Endothelial cell of umbilical vein (primary cell): ENCODE measurements at regions of chr9 and their contacts with region 1.

Region 1: GRCh38 chr9:104895572-104895971 is 32.4 kb downstream of the ABCA1 start:
- DNase-seq: no peak
- H3K4me3 ChIP-seq: no peak overlapping the region
- H3K27ac ChIP-seq: no peak overlapping the region
- H3K4me1 ChIP-seq: no peaks in the 10 kb centered on the region
- H3K27me3 ChIP-seq: no peaks in the 10 kb centered on the region
- CTCF ChIP-seq: no peak
- POLR2A ChIP-seq: no peak

Region 2: DNA sequence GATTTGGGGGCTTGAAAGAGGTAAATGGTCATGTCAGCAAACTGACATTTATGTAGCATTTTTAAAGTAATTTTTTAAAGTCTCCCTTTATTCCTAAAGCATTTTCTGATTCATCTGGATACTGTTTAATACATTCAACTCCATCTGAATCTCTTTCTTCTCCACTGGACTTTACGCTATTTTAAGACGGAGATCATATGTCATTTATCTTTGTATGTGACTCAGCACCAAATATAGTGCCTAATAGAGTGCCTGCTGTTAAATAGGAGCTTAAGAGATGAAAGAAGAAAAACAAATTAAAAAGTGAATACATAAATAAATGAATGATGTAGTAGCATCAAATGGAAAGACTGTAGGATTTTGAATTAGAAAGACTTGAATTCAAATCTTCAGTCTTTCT is 1350.3 kb before region 1 on chr9:
- CTCF ChIA-PET with region 1: no interaction called
- POLR2A ChIA-PET with region 1: no interaction called
- dilution Hi-C with region 1: no loop called
- intact Hi-C with region 1: no loop called
- DNase-seq: no peak
- H3K4me3 ChIP-seq: no peak overlapping the region
- H3K27ac ChIP-seq: no peak overlapping the region
- H3K4me1 ChIP-seq: no peaks in the 10 kb centered on the region
- H3K27me3 ChIP-seq: no peaks in the 10 kb centered on the region
- CTCF ChIP-seq: no peak
- POLR2A ChIP-seq: no peak

Region 3: DNA sequence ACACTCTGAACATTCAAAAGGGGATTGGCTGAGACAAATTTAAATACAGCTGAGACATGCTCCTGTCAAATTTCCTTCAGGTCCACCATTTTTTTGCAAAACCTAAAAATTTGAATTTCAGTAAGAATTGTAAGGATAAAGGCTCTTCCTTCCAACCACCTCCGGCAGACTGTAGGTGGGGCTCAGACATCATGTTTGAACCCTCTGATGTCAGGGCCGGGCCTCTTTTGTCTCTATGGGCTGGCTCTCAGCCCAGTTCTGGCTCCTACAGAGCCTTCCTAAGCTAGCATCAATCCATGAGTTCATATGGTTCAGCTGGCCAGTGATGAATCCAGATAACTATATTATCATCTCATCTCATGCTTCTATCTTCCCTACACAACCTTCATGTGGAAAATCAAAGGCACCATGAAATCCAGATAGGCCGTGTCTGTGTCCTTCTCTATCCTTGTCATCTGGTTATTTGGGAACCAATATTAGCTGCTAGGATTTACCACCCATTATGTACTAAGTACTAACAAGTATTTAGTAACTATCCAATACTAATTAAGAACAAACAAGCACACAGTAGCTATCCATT is 87.4 kb before region 1 on chr9:
- CTCF ChIA-PET with region 1: no interaction called
- POLR2A ChIA-PET with region 1: no interaction called
- dilution Hi-C with region 1: no loop called
- intact Hi-C with region 1: no loop called
- DNase-seq: peak; percentile 46
- H3K4me3 ChIP-seq: no peak overlapping the region
- H3K27ac ChIP-seq: no peak overlapping the region
- H3K4me1 ChIP-seq: no peaks in the 10 kb centered on the region
- H3K27me3 ChIP-seq: no peaks in the 10 kb centered on the region
- CTCF ChIP-seq: peak; percentile 24 to 48
- POLR2A ChIP-seq: no peak

Region 4: GRCh38 chr9:104879555-104880309 is 15.8 kb before region 1 on chr9:
- CTCF ChIA-PET with region 1: interaction called, 7 read pairs
- POLR2A ChIA-PET with region 1: no interaction called
- dilution Hi-C with region 1: no loop called
- intact Hi-C with region 1: loop called (anchors 1 kb)
- DNase-seq: peak; percentile 82
- H3K4me3 ChIP-seq: no peak overlapping the region
- H3K27ac ChIP-seq: peak overlapping the region; percentile 59
- H3K4me1 ChIP-seq: peaks cover 9% of the 10 kb centered on the region
- H3K27me3 ChIP-seq: no peaks in the 10 kb centered on the region
- CTCF ChIP-seq: no peak
- POLR2A ChIP-seq: no peak